ENCODE measurements at regions of chr1 and their contacts with region 1.

Region 1: DNA sequence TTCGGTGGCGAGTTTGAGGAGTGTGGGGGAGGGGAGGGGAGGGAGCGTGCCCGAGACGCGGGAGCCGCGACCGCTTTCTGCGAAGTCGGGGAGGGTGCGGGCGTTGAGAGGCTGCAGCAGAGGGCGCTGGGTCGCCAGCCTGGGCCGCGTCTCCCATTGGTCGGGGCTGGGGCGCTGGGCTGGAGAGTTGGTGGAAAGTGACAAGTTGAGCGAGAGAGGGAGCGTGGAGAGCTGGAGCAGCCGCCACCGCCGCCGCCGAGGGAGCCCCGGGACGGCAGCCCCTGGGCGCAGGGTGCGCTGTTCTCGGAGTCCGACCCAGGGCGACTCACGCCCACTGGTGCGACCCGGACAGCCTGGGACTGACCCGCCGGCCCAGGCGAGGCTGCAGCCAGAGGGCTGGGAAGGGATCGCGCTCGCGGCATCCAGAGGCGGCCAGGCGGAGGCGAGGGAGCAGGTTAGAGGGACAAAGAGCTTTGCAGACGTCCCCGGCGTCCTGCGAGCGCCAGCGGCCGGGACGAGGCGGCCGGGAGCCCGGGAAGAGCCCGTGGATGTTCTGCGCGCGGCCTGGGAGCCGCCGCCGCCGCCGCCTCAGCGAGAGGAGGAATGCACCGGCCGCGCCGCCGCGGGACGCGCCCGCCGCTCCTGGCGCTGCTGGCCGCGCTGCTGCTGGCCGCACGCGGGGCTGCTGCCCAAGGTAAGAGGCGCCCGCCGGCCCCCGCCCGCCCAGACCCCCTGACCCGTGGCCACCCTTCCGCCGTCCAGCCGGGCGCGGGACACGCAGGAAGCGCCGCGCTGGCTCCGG is at the start of gene ROR1:
- DNase-seq: peak; percentile 86 to 88
- ATAC-seq: peak; percentile 95 to 98 (median 97)
- H3K4me3 ChIP-seq: peak within 1 kb of the TSS; percentile 55 to 90 (median 73)
- H3K27ac ChIP-seq: peak within 1 kb of the TSS; percentile 69 to 96 (median 91)
- H3K4me1 ChIP-seq: peaks cover under 1 to 48% (median 16%) of the 10 kb centered on the region in 9 donors
- H3K27me3 ChIP-seq: peaks cover 0 to 46% (median 0%) of the 10 kb centered on the region in 7 donors
- CTCF ChIP-seq: peak; percentile 42 to 83 (median 63)
- total RNA-seq, gene ROR1: 12.0 to 36.2 (median 19.0) TPM

Region 2: GRCh38 chr1:63522891-63523728 is 250.9 kb before region 1 on chr1 and contains the starts of genes EFCAB7 and ITGB3BP:
- intact Hi-C with region 1: no loop called
- DNase-seq: peak; percentile 75 to 85
- ATAC-seq: peak; percentile 92 to 97 (median 96)
- H3K4me3 ChIP-seq: peak within 1 kb of the TSS; percentile 49 to 86 (median 74)
- H3K27ac ChIP-seq: peak within 1 kb of the TSS; percentile 78 to 96 (median 89)
- H3K4me1 ChIP-seq: peaks cover 3 to 24% (median 18%) of the 10 kb centered on the region in 9 donors
- H3K27me3 ChIP-seq: no peaks in the 10 kb centered on the region
- CTCF ChIP-seq: no peak
- total RNA-seq, gene EFCAB7: 4.5 to 10.7 (median 8.1) TPM
- total RNA-seq, gene ITGB3BP: 4.3 to 14.7 (median 7.4) TPM

Region 3: DNA sequence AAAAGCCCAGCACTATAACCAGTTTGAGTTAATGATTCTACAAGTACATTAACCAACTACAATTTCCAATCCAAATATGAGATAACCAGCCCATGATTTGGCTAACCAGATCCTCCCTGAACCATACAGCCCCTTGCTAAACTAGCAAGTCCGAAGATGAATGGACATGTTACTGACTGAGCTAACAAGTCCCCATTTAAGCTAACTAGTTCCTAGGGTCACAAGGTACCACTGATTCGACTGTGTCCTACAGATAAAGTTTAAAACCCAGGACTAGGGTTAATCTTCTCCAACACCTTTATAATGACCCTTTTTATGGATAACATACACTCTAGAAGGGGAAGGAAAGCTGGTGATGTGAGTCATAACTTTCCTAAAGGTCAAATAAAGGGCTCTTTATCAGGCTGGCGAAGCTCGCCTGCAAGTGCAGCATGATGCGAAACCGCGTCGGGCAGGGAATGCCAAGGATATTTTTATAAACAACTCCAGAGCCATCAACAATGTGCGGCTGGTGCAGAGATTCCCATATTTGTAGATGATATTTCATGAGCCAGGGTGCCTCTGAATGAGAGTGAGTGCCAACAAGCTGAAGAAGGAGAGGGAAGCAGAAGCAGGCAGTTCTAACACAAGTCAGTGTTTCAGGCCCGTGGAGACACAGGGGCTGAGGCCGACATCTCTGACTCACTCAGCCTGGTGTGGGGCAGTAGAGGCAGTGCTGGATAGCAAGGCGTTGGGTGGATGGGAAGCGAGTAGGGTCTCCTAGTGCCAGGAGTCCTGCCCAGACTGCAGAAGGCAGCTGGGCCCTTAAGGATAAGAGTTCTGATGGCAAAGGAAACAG is 75.8 kb before region 1 on chr1:
- intact Hi-C with region 1: loop called in 5 of 10 experiments (anchors 5 kb)
- DNase-seq: peak; percentile 61 to 69
- ATAC-seq: peak; percentile 63 to 94 (median 89)
- H3K4me3 ChIP-seq: no peak overlapping the region
- H3K27ac ChIP-seq: peak overlapping the region; percentile 76 to 99 (median 93)
- H3K4me1 ChIP-seq: peaks cover 0 to 37% (median 16%) of the 10 kb centered on the region in 9 donors
- H3K27me3 ChIP-seq: no peaks in the 10 kb centered on the region
- CTCF ChIP-seq: no peak

Region 4: GRCh38 chr1:63705078-63705477 is 68.9 kb before region 1 on chr1:
- intact Hi-C with region 1: loop called in 2 of 10 experiments (anchors 5 kb)
- DNase-seq: no peak
- ATAC-seq: no peak
- H3K4me3 ChIP-seq: no peak overlapping the region
- H3K27ac ChIP-seq: no peak overlapping the region
- H3K4me1 ChIP-seq: peaks cover 0 to 17% (median 4%) of the 10 kb centered on the region in 9 donors
- H3K27me3 ChIP-seq: no peaks in the 10 kb centered on the region
- CTCF ChIP-seq: no peak

Region 5: DNA sequence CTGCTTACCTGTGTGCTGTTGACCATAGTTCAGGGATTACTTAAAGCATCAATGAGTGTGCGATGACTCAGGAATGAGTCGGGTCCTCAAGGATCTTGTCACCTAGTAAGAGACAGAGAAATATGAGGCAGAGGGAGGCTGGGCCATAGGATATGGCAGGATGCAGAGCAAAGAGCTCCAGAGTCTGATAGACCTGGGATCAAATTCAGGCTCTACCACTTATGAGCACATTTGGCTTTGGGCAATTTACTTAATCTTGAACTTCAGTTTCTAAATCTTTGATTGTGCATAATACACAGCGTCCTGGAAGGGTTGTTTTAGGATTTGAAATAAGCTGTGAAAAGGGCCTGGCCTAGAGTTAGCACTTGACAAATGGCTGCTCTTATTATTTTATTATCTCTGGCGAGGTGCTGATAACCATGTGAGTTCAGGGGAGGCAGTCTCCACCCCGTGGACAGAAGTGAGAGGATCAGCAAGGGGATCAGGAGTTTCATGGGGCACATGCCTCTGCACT is 94.3 kb after region 1 on chr1:
- intact Hi-C with region 1: loop called in 1 of 10 experiments (anchors 10 kb)
- DNase-seq: no peak
- ATAC-seq: peak in 5 of 8 donors; percentile 40 to 65 (median 54)
- H3K4me3 ChIP-seq: no peak overlapping the region
- H3K27ac ChIP-seq: peak overlapping the region in 2 of 10 donors; percentile 2 to 18
- H3K4me1 ChIP-seq: peaks cover 0 to 55% (median 6%) of the 10 kb centered on the region in 9 donors
- H3K27me3 ChIP-seq: no peaks in the 10 kb centered on the region
- CTCF ChIP-seq: peak in 3 of 9 donors; percentile 15 to 36 (median 31)

Region 6: GRCh38 chr1:63917571-63918417 is 143.8 kb after region 1 on chr1:
- intact Hi-C with region 1: loop called in 4 of 10 experiments (anchors 5 to 10 kb)
- DNase-seq: no peak
- ATAC-seq: no peak
- H3K4me3 ChIP-seq: no peak overlapping the region
- H3K27ac ChIP-seq: no peak overlapping the region
- H3K4me1 ChIP-seq: peaks cover 8 to 75% (median 42%) of the 10 kb centered on the region in 9 donors
- H3K27me3 ChIP-seq: no peaks in the 10 kb centered on the region
- CTCF ChIP-seq: peak in 2 of 9 donors; percentile 17 to 22

Region 7: GRCh38 chr1:63968663-63969440 is 194.8 kb after region 1 on chr1:
- intact Hi-C with region 1: no loop called
- DNase-seq: peak; percentile 49 to 54
- ATAC-seq: peak; percentile 46 to 86 (median 76)
- H3K4me3 ChIP-seq: no peak overlapping the region
- H3K27ac ChIP-seq: peak overlapping the region in 6 of 10 donors; percentile 2 to 65 (median 26)
- H3K4me1 ChIP-seq: peaks cover 6 to 40% (median 12%) of the 10 kb centered on the region in 9 donors
- H3K27me3 ChIP-seq: no peaks in the 10 kb centered on the region
- CTCF ChIP-seq: no peak

Region 8: GRCh38 chr1:64231153-64231552 is 457.1 kb after region 1 on chr1:
- intact Hi-C with region 1: loop called in 1 of 10 experiments (anchors 10 kb)
- DNase-seq: no peak
- ATAC-seq: no peak
- H3K4me3 ChIP-seq: no peak overlapping the region
- H3K27ac ChIP-seq: no peak overlapping the region
- H3K4me1 ChIP-seq: no peaks in the 10 kb centered on the region
- H3K27me3 ChIP-seq: peaks cover 0 to 4% (median 0%) of the 10 kb centered on the region in 7 donors
- CTCF ChIP-seq: no peak

Measured in heart right ventricle (tissue), 16 donors.